Head of caudate nucleus (tissue), 42 donors: ENCODE measurements at regions of chr1 and their contacts with region 1.

Region 1: DNA sequence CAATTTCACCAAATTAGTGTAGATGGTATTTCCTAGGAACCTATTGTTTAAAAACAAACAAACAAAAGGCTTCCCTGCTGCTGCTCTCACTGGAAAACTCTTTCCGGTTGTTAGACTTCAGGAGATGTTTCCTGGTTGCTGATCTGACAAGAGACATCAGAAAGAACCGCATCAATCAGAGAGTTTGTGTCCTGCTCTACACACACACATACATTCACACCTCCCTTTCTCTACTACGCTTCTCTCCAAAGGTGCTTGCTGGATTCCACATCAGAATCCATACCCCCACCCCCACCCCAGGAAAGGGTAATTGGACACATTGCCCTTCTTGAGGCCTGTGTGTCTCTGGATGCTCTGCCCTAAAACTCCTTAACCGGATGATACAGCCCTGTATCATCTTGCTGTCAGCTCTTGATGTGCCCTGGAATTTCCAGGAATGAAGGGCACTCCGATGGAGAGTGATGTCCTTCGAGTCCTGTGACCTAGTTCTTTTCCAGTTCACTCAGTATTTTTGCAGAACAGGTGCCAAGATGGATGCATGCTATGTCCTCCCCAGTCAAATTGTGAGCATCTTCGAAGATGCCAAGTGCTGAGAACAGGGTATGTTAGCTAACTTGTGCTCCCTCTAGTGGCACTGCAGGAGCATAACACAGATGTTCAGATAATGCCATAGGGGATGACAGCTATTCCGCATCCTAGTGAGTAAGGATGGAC is 113.7 kb upstream of the SLC35F3 start:
- DNase-seq: peak in 38 of 42 donors; percentile 7 to 85 (median 58)

Region 2: GRCh38 chr1:233518349-233518748 is 272.5 kb before region 1 on chr1:
- intact Hi-C with region 1: loop called (anchors 5 kb)
- DNase-seq: peak in 36 of 42 donors; percentile 15 to 88 (median 64)

Region 3: GRCh38 chr1:233554037-233554436 is 236.8 kb before region 1 on chr1:
- intact Hi-C with region 1: no loop called
- DNase-seq: no peak

Region 4: DNA sequence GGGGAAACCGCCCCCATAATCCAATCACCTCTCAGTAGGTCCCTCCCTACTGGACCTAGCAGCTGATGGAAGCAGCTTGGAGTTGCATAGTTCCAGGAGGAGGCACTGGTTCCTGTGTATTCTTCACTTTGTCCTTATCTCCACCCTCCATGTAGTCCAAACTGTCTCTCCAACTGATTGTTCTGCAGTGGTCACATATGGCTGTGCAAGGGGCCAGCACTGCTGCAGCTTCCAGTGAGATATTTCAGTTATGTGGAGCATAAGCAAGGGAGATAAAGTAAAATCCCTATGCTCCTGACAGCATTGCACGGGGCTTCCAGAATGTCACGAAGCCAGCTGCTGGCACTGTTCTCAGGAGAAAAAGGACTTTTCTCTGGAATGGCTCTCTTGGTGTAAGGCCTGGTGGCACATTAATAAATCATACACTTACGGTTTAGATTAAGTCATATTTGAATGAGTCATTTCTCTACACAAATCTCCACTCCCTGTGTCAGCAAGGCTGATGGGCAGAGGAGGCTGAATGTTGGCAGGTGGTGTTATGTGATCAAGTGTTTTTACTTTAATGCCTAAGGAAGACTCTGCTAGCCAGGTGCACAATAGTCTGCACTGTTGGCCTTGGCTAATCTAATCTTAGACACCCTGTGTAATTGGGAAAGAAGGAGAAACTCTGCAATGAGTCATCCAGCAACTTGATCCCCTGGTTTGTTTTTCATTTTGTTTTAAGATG is 83.5 kb before region 1 on chr1:
- intact Hi-C with region 1: no loop called
- DNase-seq: peak in 16 of 42 donors; percentile 3 to 67 (median 30)

Region 5: GRCh38 chr1:233919786-233920185 is 129.0 kb after region 1 on chr1:
- intact Hi-C with region 1: no loop called
- DNase-seq: no peak